ENCODE measurements at regions of chr11 and their contacts with region 1.

Region 1: DNA sequence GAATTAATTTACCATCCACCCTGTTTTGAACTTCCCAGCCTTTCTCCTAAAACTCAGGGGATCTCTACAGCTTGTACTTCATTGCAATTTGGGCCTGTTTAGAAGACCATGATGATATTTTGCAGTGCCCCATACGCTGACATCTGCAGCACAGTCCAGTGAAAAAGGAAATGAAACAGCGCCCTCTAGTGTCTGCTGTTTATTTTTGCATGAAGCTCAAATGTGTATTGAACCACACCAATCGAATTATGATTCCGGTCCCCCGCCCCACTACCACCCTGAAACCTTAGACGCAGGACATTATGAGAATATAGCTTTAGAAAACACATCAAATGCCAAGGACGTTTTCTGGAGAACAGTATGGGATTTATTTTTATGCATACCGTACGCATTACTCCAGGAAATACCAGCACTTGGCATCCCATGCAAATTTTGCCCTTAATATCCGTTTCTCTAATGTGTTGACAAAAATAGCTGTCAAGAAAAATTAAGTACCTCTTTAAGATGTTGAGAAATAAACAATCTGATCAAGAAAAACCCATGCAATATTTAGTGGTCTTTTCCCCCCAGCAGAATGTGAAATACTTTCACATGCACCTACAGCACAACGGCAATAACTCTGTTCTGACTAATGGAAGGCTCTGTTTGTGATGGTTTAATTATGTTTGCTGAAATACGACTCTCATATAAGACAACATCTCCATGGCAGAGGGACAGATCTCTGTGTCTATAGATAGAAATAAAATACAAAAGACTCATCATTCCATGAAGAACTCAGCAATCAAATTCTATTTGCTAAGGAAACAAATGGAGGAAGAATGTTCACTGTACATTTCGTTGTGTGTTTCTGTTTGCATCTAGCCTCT is 93.9 kb downstream of the TECTA start:
- DNase-seq: peak; percentile 39
- H3K4me3 ChIP-seq: no peak overlapping the region
- H3K27ac ChIP-seq: no peak overlapping the region
- H3K27me3 ChIP-seq: peaks cover 4% of the 10 kb centered on the region
- CTCF ChIP-seq: peak; percentile 80

Region 2: GRCh38 chr11:120682866-120683265 is 512.1 kb before region 1 on chr11:
- CTCF ChIA-PET with region 1: interaction called, 10 read pairs
- POLR2A ChIA-PET with region 1: no interaction called
- DNase-seq: peak; percentile 24
- H3K4me3 ChIP-seq: no peak overlapping the region
- H3K27ac ChIP-seq: no peak overlapping the region
- H3K27me3 ChIP-seq: peaks cover 5% of the 10 kb centered on the region
- CTCF ChIP-seq: no peak

Region 3: GRCh38 chr11:121179306-121179705 is 15.7 kb before region 1 on chr11:
- CTCF ChIA-PET with region 1: interaction called, 25 read pairs
- POLR2A ChIA-PET with region 1: no interaction called
- DNase-seq: no peak
- H3K4me3 ChIP-seq: no peak overlapping the region
- H3K27ac ChIP-seq: no peak overlapping the region
- H3K27me3 ChIP-seq: no peaks in the 10 kb centered on the region
- CTCF ChIP-seq: no peak

Region 4: DNA sequence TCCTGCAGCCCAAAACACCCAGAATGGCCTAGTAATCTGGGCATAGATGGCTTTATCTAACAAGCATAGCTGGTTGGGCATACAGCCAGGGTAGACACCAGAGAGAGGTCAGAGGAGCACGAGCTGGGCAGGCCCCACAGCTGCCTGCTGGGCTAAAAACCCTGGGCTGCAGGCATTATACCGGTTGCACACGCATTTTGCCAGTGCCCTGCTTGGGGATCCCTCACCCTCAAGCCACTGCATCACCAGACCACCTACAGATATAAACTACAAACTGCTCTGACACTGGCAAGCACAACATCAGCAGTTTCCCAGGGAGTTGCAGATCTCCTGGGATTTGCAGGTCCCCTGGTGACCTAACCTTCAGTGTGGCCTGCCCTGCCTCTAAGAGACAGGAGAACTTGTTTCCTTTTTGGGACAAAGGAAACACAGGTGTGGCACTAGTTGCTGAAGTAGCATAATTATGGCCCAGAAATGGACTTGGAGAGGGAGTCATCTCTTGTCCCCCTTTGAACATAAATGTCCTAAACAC is 18.5 kb after region 1 on chr11:
- CTCF ChIA-PET with region 1: interaction called, 33 read pairs
- POLR2A ChIA-PET with region 1: no interaction called
- DNase-seq: no peak
- H3K4me3 ChIP-seq: no peak overlapping the region
- H3K27ac ChIP-seq: no peak overlapping the region
- H3K27me3 ChIP-seq: no peaks in the 10 kb centered on the region
- CTCF ChIP-seq: no peak

Region 5: DNA sequence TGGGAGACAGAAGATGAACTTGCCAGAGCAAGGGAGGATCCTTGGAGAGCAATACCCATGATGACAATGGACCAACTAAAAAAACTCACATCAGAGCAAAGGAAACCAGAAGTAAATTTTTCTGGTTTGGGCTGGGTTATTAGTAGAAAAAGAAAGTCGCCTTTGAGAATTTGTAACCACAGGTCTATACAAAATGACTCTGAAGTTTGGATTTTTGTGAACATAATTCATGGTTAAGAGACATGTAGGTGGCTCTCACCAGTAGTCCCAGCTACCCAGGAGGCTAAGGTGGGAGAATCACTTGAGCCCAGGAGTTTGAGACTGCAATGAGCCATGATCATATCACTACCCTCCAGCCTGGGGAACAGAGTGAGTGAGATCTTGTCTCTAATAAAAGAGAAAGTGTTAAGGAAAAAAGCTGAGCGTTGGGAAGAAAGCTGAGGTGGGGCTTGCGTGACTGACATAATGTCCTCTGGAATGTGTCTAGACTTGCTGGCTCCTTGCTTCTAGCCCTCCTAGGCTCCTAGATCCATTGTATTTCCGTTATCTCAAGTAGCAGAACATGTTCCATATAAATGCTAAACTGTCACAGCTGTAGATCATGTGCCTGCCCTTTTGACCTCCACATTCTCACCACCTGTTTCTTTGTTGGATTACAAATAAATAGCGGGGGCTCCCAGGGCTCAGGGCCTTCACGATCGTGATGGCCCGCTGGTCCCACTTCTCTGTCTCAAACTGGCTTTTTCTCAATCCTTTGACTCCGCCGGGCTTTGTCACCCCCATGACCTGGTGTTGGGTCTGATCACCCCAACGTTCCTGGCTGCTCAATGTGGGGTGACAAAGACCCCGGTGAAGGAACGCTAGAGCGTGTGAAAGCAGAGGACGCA is 41.4 kb after region 1 on chr11:
- CTCF ChIA-PET with region 1: interaction called, 10 read pairs
- POLR2A ChIA-PET with region 1: no interaction called
- DNase-seq: no peak
- H3K4me3 ChIP-seq: no peak overlapping the region
- H3K27ac ChIP-seq: no peak overlapping the region
- H3K27me3 ChIP-seq: peaks cover 12% of the 10 kb centered on the region
- CTCF ChIP-seq: no peak

Region 6: GRCh38 chr11:122505304-122506006 is 1310.5 kb after region 1 on chr11:
- CTCF ChIA-PET with region 1: interaction called, 15 read pairs
- POLR2A ChIA-PET with region 1: no interaction called
- DNase-seq: peak; percentile 81
- H3K4me3 ChIP-seq: no peak overlapping the region
- H3K27ac ChIP-seq: no peak overlapping the region
- H3K27me3 ChIP-seq: no peaks in the 10 kb centered on the region
- CTCF ChIP-seq: peak; percentile 90